ENCODE measurements at regions of chr6 and their contacts with region 1.

Region 1: GRCh38 chr6:149746147-149746946 is at the start of gene NUP43:
- DNase-seq: peak; percentile 86
- H3K4me3 ChIP-seq: peak within 1 kb of the TSS; percentile 86 to 95
- H3K27ac ChIP-seq: peak within 1 kb of the TSS; percentile 51 to 63; a peak in 3 of 4 replicates
- H3K4me1 ChIP-seq: peaks cover 0 to 5% of the 10 kb centered on the region in 2 experiments; a peak in 2 of 4 replicates
- H3K27me3 ChIP-seq: no peaks in the 10 kb centered on the region
- CTCF ChIP-seq: peak; percentile 47; the same call in 1 of the 2 replicates
- EP300 ChIP-seq: no peak
- RAD21 ChIP-seq: no peak
- polyA plus RNA-seq, gene NUP43: 10.1 and 16.4 TPM in 2 replicates

Region 2: GRCh38 chr6:149443411-149444181 is 302.8 kb before region 1 on chr6:
- CTCF ChIA-PET with region 1: no interaction called
- POLR2A ChIA-PET with region 1: no interaction called
- DNase-seq: no peak
- H3K4me3 ChIP-seq: no peak overlapping the region
- H3K27ac ChIP-seq: no peak overlapping the region
- H3K4me1 ChIP-seq: peaks cover 0 to 3% of the 10 kb centered on the region in 2 experiments; a peak in 1 of 4 replicates
- H3K27me3 ChIP-seq: no peaks in the 10 kb centered on the region
- CTCF ChIP-seq: no peak
- EP300 ChIP-seq: no peak
- RAD21 ChIP-seq: no peak

Region 3: DNA sequence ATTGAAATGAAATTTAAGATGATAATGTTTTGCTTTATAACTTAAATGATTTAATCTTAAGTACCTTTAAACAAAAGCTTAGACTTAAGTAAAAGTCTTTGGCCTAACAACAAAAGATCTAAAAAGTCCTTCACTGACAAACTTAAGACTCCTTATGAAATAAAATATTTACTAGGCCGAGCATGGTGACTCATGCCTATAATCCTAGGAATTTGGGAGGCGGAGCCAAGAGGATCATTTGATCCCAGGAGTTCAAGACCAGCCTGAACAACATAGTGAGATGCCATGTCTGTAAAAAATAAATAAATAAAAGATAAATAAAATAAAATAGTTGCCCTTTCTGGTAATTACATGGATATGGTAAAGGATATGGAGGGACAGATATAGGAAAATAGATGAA is 110.2 kb before region 1 on chr6:
- CTCF ChIA-PET with region 1: no interaction called
- POLR2A ChIA-PET with region 1: no interaction called
- DNase-seq: no peak
- H3K4me3 ChIP-seq: no peak overlapping the region
- H3K27ac ChIP-seq: no peak overlapping the region
- H3K4me1 ChIP-seq: no peaks in the 10 kb centered on the region
- H3K27me3 ChIP-seq: no peaks in the 10 kb centered on the region
- CTCF ChIP-seq: no peak
- EP300 ChIP-seq: no peak
- RAD21 ChIP-seq: no peak

Region 4: DNA sequence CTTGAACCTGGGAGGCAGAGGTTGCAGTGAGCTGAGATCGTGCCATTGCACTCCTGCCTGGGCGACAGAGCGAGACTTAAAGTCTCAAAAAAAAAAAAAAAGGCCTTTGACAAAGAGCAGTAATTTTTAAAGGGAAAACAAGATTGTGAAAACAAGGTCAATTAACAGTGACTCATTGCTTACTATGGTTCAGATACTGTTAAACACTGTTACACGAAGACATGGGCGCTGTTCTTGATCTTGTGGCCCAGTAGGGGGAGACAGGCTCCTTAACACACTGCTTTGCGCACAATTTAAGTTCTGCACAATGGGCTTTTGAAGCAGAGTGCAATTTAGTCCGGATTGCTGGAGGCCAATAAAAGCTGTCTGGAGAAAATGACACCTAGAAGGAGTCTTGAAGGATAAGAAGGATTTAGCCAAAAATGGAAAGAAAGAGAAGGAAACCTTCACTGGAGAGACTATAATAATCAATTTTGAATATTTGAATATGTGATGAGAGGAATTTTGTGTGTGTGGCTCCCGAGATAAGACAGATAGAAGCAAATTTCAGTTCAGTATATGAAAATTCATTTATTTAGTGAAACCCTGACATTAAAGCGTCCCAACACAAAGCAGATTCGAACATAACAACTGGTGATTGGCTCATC is 22.5 kb before region 1 on chr6:
- CTCF ChIA-PET with region 1: interaction called, 12 read pairs
- POLR2A ChIA-PET with region 1: interaction called, 8 read pairs
- DNase-seq: peak; percentile 53
- H3K4me3 ChIP-seq: peak overlapping the region in 1 of 2 experiments; percentile 51; a peak in 1 of 4 replicates
- H3K27ac ChIP-seq: no peak overlapping the region
- H3K4me1 ChIP-seq: no peaks in the 10 kb centered on the region
- H3K27me3 ChIP-seq: no peaks in the 10 kb centered on the region
- CTCF ChIP-seq: peak; percentile 78
- EP300 ChIP-seq: no peak
- RAD21 ChIP-seq: peak; percentile 70

Region 5: GRCh38 chr6:149733089-149733720 is 13.1 kb before region 1 on chr6:
- CTCF ChIA-PET with region 1: interaction called, 16 read pairs
- POLR2A ChIA-PET with region 1: no interaction called
- DNase-seq: no peak
- H3K4me3 ChIP-seq: no peak overlapping the region
- H3K27ac ChIP-seq: no peak overlapping the region
- H3K4me1 ChIP-seq: no peaks in the 10 kb centered on the region
- H3K27me3 ChIP-seq: no peaks in the 10 kb centered on the region
- CTCF ChIP-seq: no peak
- EP300 ChIP-seq: no peak
- RAD21 ChIP-seq: no peak